ENCODE measurements at regions of chr4 and their contacts with region 1.

Region 1: GRCh38 chr4:123661080-123661737 is 264.6 kb downstream of the SPRY1 start:
- DNase-seq: no peak
- ATAC-seq: no peak
- H3K4me3 ChIP-seq: no peak overlapping the region
- H3K27ac ChIP-seq: no peak overlapping the region
- H3K4me1 ChIP-seq: no peaks in the 10 kb centered on the region
- H3K27me3 ChIP-seq: peaks cover 0 to 2% of the 10 kb centered on the region in 2 experiments; a peak in 1 of 4 replicates
- CTCF ChIP-seq: peak in 2 of 3 experiments; percentile 21 to 38; a peak in 3 of 6 replicates
- EP300 ChIP-seq: no peak
- POLR2A ChIP-seq: no peak
- RAD21 ChIP-seq: peak; percentile 51

Region 2: GRCh38 chr4:123096038-123096437 is 565.2 kb before region 1 on chr4:
- CTCF ChIA-PET with region 1: interaction called, 29 read pairs
- POLR2A ChIA-PET with region 1: no interaction called
- RAD21 ChIA-PET with region 1: no interaction called
- SMC1A ChIA-PET with region 1: interaction called, 11 read pairs
- in situ Hi-C with region 1: loop called (anchors 10 kb)
- intact Hi-C with region 1: no loop called
- DNase-seq: no peak
- ATAC-seq: no peak
- H3K4me3 ChIP-seq: no peak overlapping the region
- H3K27ac ChIP-seq: no peak overlapping the region
- H3K4me1 ChIP-seq: no peaks in the 10 kb centered on the region
- H3K27me3 ChIP-seq: no peaks in the 10 kb centered on the region
- CTCF ChIP-seq: no peak
- EP300 ChIP-seq: no peak
- POLR2A ChIP-seq: no peak
- RAD21 ChIP-seq: no peak

Region 3: DNA sequence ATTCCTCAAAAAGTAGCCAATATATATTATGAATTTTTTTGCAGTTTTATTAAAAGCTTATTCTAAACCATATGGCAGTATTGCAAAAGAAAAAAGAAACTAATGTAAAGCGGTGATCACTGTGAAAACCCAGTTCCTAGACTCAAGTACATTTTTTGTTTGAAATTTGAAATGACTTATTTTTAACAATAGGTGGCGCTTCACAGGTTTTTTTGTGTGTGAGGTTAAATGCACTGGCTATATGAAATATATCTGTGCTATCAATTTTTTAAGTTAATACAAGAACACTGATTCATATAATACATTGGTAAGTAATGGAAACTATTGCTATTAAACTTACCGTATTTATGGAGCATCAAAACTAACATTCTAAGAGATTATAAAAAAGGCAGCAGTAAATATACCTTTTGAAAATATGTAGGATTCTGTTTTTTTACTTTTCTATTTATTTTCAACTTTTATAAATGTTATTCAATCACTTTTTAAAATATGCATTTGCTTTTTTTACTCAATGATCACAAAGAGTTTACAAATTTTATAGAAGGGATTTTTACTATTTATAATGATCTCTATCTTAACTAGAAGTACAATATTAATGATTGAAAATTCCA is 270.3 kb before region 1 on chr4:
- CTCF ChIA-PET with region 1: interaction called, 122 read pairs
- POLR2A ChIA-PET with region 1: no interaction called
- RAD21 ChIA-PET with region 1: interaction called, 60 read pairs
- SMC1A ChIA-PET with region 1: interaction called, 74 read pairs
- in situ Hi-C with region 1: loop called (anchors 5 kb)
- intact Hi-C with region 1: loop called (anchors 2 kb)
- DNase-seq: no peak
- ATAC-seq: peak; percentile 70
- H3K4me3 ChIP-seq: no peak overlapping the region
- H3K27ac ChIP-seq: no peak overlapping the region
- H3K4me1 ChIP-seq: no peaks in the 10 kb centered on the region
- H3K27me3 ChIP-seq: no peaks in the 10 kb centered on the region; a peak in 2 of 4 replicates
- CTCF ChIP-seq: peak; percentile 33 to 52 (median 46); a peak in 5 of 6 replicates
- EP300 ChIP-seq: no peak
- POLR2A ChIP-seq: no peak
- RAD21 ChIP-seq: peak; percentile 60

Region 4: DNA sequence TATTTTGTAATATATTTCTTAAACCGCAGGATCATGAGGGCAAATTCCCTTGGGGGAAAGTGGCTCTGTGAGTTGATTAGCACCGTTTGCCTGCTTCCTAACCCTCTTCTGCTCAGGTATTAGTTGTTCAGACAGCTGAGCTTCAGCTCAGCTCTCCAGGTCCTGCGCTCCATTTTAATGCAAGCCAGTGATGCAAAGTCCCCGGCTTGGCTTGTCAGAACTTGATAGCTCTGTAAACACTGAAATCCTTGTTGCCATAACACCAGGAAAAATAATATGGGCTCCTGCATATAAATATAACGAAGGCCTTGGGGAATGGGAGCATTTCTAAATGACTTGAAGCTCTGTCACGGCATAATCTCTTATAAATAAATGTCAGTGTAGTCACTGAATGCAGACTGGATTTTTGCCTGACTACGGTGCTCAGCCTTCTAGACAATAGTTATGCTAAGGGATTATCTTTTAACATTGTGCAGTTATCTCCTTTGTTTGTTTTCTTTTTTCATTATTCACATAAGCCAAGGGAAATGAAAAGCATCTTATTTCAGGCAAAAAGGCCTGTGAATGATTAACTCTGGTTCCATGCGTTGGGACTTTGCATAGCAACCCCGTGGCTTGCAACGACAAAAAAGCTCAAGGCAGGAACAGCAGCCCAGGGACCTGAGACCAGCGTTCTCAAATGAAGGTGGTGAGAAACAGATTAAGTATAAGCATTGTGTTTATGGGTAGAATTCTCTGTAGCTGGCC is 11.4 kb before region 1 on chr4:
- CTCF ChIA-PET with region 1: interaction called, 33 read pairs
- POLR2A ChIA-PET with region 1: no interaction called
- RAD21 ChIA-PET with region 1: interaction called, 18 read pairs
- SMC1A ChIA-PET with region 1: interaction called, 33 read pairs
- in situ Hi-C with region 1: no loop called
- intact Hi-C with region 1: no loop called
- DNase-seq: no peak
- ATAC-seq: peak; percentile 72
- H3K4me3 ChIP-seq: no peak overlapping the region
- H3K27ac ChIP-seq: no peak overlapping the region
- H3K4me1 ChIP-seq: no peaks in the 10 kb centered on the region; the same call in 1 of the 2 replicates
- H3K27me3 ChIP-seq: no peaks in the 10 kb centered on the region
- CTCF ChIP-seq: no peak
- EP300 ChIP-seq: no peak
- POLR2A ChIP-seq: no peak
- RAD21 ChIP-seq: no peak

Region 5: DNA sequence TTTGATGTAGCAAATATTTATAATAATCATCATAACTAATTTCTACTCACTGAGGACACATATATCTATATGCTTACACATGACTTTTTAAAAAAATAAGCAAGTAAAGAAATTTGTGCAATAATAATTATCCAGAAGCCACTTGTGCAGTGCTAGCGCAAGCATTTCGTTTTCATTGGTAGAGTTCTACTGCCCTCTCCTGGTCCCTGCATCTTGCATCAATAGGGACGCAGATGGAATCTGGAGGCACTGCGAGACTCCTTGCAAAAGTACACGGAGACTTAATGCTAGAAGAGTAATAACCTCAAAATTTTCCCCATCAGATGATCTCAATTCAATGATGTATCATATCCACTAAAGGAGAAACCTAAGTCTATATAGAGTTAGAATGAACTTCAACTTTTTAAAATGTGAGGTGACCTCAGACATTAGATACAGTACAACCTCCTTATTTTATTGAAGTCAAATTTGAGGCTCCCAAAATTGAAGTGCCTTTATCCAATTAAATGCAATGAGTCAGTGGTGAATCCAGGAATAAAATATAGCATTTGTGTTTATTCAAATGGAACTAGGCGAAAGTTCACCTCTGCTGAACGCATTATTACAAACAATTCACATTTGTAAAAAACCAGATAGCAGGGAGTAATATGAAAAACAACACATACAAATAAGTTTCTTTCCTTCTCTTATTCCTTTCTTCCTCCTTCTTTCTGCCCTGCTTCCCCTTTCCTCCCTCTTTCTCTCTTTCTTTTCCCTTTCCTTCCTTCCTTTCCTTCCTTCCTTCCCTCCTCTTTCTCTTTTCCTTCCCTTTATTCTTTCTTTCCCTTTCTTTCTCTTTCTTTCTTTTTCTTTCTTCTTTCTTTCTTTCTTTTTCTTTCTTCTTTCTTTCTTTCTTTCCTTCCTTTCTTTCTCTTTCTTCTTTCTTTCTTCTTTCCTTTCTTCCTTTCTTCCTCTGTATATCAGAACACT is 601.3 kb after region 1 on chr4:
- CTCF ChIA-PET with region 1: no interaction called
- POLR2A ChIA-PET with region 1: no interaction called
- RAD21 ChIA-PET with region 1: no interaction called
- SMC1A ChIA-PET with region 1: no interaction called
- in situ Hi-C with region 1: no loop called
- intact Hi-C with region 1: loop called (anchors 2 kb)
- DNase-seq: peak; percentile 11
- ATAC-seq: peak; percentile 88
- H3K4me3 ChIP-seq: no peak overlapping the region
- H3K27ac ChIP-seq: no peak overlapping the region
- H3K4me1 ChIP-seq: no peaks in the 10 kb centered on the region
- H3K27me3 ChIP-seq: no peaks in the 10 kb centered on the region
- CTCF ChIP-seq: peak; percentile 69 to 82 (median 74)
- EP300 ChIP-seq: no peak
- POLR2A ChIP-seq: no peak
- RAD21 ChIP-seq: peak; percentile 90

Measured in GM12878 (cell line).